Activated CD4-positive, alpha-beta T cell treated with anti-CD3 and anti-CD28 coated beads for 36 hours (primary cell): ENCODE measurements at regions of chr2 and their contacts with region 1.

Region 1: GRCh38 chr2:56132138-56132537 is 51.7 kb upstream of the CCDC85A start:
- DNase-seq: no peak
- ATAC-seq: no peak
- H3K4me3 Mint-ChIP-seq: no peak overlapping the region
- H3K27ac Mint-ChIP-seq: no peak overlapping the region
- H3K4me1 Mint-ChIP-seq: no peaks in the 10 kb centered on the region
- H3K27me3 Mint-ChIP-seq: peaks cover 4% of the 10 kb centered on the region

Region 2: GRCh38 chr2:56084111-56084936 is 47.8 kb before region 1 on chr2:
- CTCF ChIA-PET with region 1: no interaction called
- POLR2A ChIA-PET with region 1: no interaction called
- intact Hi-C with region 1: no loop called
- DNase-seq: no peak
- ATAC-seq: no peak
- H3K4me3 Mint-ChIP-seq: no peak overlapping the region
- H3K27ac Mint-ChIP-seq: no peak overlapping the region
- H3K4me1 Mint-ChIP-seq: no peaks in the 10 kb centered on the region
- H3K27me3 Mint-ChIP-seq: no peaks in the 10 kb centered on the region

Region 3: DNA sequence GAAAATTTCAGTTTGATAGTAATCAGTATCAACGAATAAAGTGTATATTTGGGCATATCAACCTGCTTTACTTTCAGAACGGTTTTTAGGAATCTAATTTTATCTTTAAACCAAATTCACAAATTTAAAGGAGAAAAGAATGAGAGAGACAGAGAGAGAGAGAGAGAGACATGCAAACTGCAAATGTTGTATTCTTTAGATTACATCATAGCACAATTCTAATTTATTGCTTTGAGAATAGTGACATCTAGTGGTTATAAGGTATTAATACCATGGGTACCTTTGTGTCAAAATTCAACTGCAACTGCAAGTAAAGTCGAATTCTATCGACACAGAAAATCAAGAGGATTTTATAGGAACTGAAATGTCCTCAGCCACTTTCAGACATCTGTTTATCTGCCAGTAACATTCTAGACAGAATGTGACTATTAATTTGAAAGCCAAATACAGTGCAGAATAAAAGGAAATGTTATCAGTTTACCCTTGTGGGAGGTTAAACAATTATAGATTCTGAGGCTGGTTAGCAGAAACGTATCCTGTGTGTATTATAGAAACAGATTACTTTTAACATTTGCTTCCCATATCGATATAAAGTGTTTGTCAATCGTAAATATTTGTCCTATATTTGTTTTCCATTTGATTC is 1384.7 kb after region 1 on chr2:
- CTCF ChIA-PET with region 1: no interaction called
- POLR2A ChIA-PET with region 1: no interaction called
- intact Hi-C with region 1: loop called in 1 of 2 experiments (anchors 5 kb)
- DNase-seq: no peak
- ATAC-seq: no peak
- H3K4me3 Mint-ChIP-seq: no peak overlapping the region
- H3K27ac Mint-ChIP-seq: no peak overlapping the region
- H3K4me1 Mint-ChIP-seq: no peaks in the 10 kb centered on the region
- H3K27me3 Mint-ChIP-seq: no peaks in the 10 kb centered on the region